Gastrocnemius medialis (tissue), 4 donors: ENCODE measurements at regions of chr18 and their contacts with region 1.

Region 1: DNA sequence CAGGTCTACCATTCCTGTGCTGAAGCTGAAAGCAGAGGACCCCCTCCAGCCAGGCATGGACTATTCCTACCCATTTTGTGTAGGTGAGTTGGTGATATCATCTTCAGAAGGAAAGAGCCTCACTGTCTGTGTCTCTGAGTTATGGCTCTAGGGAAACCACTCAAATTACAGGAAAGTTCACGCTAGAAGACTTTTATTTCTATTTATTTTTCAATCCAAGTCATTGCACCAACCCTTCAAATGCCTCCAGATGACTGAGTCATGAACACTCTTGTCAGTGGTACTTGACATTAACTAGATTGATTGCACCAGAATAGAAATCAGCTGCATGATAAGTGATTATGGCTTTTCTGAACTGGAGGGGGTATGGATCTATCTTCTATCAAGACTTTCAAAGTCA is 338.4 kb downstream of the MBD2 start:
- DNase-seq: no peak
- ATAC-seq: no peak
- H3K4me3 ChIP-seq: no peak overlapping the region
- H3K27ac ChIP-seq: no peak overlapping the region
- H3K4me1 ChIP-seq: no peaks in the 10 kb centered on the region
- H3K27me3 ChIP-seq: no peaks in the 10 kb centered on the region
- CTCF ChIP-seq: no peak
- POLR2A ChIP-seq: no peak

Region 2: DNA sequence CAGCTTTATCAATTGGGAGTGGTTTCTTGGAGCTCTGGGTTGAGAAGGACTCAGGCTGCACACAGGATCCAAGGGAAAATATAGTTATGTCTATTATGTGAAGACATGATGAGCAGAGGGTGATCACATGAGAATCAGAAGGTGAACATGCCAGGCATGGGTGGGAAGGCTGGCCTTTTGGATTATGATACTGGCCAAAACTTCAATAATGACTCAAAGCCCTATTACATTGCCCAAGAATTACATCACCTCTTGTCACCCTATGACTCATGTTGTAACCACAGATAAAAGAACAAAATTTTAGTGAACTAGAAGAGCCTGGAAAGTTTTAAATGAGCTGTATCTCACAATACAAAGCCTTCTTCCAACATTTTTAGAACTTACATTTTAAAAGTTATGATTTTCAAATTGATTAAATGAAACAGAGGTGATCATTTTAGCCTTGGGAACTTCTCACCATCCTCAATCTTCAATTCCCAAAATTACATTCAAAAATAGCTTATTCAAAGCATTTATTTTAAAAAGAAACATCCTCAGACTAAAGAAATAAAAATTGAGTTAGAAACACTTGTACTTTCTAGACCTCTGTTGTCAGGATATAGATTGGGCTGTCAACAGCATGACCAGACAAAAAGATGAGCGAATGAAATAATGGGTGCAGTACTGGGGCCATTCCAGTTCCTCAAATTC is 89.9 kb before region 1 on chr18:
- in situ Hi-C with region 1: loop called in 1 of 4 experiments (anchors 25 kb)
- intact Hi-C with region 1: no loop called
- DNase-seq: peak in 1 of 2 donors; percentile 14
- ATAC-seq: peak; percentile 30 to 54
- H3K4me3 ChIP-seq: no peak overlapping the region
- H3K27ac ChIP-seq: no peak overlapping the region
- H3K4me1 ChIP-seq: peaks cover 0 to 2% of the 10 kb centered on the region in 2 donors
- H3K27me3 ChIP-seq: no peaks in the 10 kb centered on the region
- CTCF ChIP-seq: no peak
- POLR2A ChIP-seq: no peak